Astrocyte of the cerebellum (primary cell): ENCODE measurements at regions of chr3 and their contacts with region 1.

Region 1: GRCh38 chr3:184443380-184443779 is 63.5 kb downstream of the CHRD start:
- DNase-seq: no peak
- H3K4me3 ChIP-seq: no peak overlapping the region
- CTCF ChIP-seq: no peak

Region 2: DNA sequence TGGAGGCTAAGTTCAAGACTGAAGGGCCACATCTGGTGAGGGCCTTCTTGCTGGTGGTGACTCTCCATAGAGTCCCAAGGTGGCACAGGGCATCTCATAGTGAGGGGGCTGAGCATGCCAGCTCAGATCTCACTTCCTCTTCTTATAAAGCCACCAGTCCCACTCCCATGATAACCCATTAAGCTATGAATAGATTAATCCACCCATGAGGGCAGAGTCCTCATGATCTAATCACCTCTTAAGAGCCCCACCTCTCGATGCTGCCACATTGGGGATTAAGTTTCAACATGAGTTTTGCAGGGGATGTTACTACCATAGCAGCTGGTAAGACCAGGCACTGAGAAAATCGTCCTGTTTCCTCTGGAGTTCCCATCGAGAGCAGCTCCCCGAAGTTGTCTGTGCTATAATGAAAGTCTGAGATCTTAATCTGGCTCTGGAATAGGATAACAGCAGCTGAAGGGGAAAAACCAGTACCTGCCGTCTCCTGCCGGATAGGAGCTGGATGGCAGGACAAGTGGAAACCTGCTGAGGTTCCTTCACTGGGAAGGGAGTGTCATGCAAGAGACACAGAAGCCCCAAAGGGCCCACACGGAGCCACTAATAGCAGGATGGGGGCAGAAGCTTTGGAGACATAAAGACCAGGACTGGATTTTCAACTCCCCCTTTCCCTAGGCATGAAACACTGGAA is 38.7 kb after region 1 on chr3:
- in situ Hi-C with region 1: no loop called
- DNase-seq: no peak
- H3K4me3 ChIP-seq: no peak overlapping the region
- CTCF ChIP-seq: no peak

Region 3: DNA sequence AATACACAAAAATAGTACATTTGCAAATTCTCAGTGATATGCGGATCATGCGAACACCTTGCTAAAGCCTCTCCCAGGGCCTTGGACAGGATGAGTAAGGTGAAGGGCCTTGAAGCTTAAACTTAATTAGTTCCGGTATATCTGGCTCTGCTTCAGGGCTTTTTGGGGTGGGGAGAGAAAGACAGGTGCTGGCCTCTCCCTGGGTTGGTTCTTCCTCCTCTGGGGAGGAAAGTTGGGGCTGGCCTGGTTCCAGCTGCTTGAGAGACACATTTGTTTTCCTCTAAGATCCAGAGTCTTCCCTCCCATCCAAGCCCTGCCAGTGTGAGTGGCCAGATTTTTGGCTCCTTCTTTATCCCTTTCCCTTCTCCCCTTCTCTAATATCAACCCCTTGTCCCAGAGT is 53.6 kb after region 1 on chr3:
- in situ Hi-C with region 1: loop called (anchors 5 kb)
- DNase-seq: no peak
- H3K4me3 ChIP-seq: no peak overlapping the region
- CTCF ChIP-seq: no peak

Region 4: DNA sequence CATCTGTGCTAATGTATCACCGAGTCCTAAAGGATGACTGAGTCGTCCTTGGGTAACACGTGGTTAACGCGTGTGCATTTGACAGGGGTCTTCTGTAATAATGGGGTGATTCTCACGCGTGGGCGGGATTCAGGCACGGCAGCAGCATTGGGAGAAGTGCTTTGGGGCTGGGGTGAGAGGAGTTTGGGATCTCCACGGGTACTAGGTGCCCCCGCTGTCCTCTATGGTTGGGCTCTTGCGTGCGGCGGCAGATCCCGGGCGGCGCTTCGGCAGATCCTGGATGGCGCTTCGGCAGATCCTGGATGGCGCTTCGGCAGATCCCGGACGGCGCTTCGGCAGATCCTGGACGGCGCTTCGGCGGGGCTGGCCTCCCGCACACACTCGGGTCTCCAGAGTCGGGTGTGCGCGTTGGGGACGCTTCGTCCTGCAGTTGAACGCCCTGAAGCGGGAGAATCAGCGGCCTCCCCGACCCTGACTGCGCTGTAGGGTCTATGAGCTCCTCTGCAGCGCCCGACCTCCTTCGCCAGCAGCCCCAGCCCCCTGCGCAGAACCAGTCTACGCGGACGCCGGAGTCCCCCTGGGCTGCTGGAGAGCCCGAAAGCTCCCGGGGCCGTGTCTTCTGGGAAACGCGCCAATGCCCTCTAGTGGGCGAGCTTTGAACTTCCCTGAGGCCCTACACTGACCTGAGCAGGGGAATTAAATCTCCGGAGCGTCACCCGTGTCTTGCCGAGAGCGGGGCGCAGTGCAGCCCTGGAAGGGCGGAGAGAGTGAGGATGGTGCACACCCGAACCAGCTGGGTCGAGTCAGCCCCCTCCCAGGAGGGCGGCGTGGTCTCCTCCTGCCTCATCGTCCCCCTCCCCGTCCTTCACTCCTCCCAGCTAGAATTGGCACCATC is 70.1 kb after region 1 on chr3:
- in situ Hi-C with region 1: no loop called
- DNase-seq: peak; percentile 58
- H3K4me3 ChIP-seq: peak overlapping the region; percentile 34
- CTCF ChIP-seq: peak; percentile 84

Region 5: GRCh38 chr3:184543843-184544512 is 100.6 kb after region 1 on chr3:
- in situ Hi-C with region 1: no loop called
- DNase-seq: peak; percentile 78
- H3K4me3 ChIP-seq: no peak overlapping the region
- CTCF ChIP-seq: peak; percentile 85